Sciatic nerve (tissue), 2 donors: ENCODE measurements at regions of chr1 and their contacts with region 1.

Region 1: DNA sequence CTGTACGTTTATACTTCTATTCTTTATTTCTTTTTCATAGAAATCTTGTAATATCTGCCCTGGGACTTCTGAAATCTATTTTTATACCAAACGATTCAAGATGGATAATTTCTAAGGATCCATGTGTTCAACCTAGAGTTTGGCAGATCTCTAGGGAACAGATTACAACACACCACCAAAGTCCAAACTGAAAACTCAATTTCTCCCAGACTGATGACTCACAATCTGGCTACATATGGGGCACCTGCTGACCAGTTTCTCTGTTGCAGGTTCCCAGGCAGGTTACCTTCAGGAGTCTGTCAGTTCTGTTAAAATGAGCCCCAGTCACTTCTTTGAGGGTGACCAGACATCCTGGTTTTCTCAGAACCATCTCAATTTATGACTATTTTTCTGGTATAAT is 439.4 kb downstream of the GPATCH2 start:
- DNase-seq: no peak
- ATAC-seq: no peak

Region 2: GRCh38 chr1:217078078-217078690 is 113.3 kb before region 1 on chr1:
- intact Hi-C with region 1: loop called (anchors 10 kb)
- DNase-seq: no peak
- ATAC-seq: peak; percentile 38

Region 3: GRCh38 chr1:217230412-217230811 is 39.0 kb after region 1 on chr1:
- intact Hi-C with region 1: loop called (anchors 2 kb)
- DNase-seq: no peak
- ATAC-seq: no peak